PC-9 (cell line): ENCODE measurements at regions of chr5 and their contacts with region 1.

Region 1: DNA sequence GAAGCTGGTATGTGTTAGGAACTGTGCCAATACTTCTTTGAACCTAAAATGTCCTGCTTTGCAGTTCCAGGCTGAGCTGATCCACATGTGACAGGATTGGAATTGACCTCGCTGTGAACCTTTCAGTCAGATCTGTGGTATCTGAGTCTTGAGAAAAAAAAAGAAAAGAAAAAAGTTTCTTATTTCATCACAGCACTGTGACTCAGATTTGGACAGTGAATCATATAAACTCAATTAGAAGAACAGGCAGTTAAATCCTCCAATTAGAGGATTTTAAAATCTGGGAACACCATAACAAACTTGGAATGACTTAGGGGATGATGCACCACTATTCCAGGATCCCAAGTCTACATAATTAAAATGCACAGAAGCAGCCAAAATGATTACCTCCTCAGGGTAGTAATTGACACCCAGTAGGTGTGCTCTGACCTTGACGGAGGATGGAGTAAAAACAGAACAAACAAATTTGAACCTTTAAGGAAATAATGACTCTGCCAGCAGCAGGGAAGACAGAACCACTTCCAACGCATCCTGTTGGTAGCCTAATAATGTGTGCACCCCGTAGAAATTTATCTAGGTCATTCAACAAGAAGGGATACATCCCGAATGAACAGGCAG is 57.8 kb upstream of the RAI14 start:
- DNase-seq: peak; percentile 69 to 98
- H3K4me3 ChIP-seq: peak overlapping the region; percentile 6; the same call in 1 of the 2 replicates
- H3K27ac ChIP-seq: peak overlapping the region; percentile 88
- H3K4me1 ChIP-seq: peaks cover 43% of the 10 kb centered on the region
- H3K27me3 ChIP-seq: no peaks in the 10 kb centered on the region
- CTCF ChIP-seq: no peak

Region 2: GRCh38 chr5:34608859-34609648 is 10.8 kb after region 1 on chr5:
- CTCF ChIA-PET with region 1: no interaction called
- POLR2A ChIA-PET with region 1: no interaction called
- intact Hi-C with region 1: loop called (anchors 1 kb)
- DNase-seq: peak; percentile 43 to 94
- H3K4me3 ChIP-seq: peak overlapping the region; percentile 12; the same call in 1 of the 2 replicates
- H3K27ac ChIP-seq: peak overlapping the region; percentile 82
- H3K4me1 ChIP-seq: peaks cover 39% of the 10 kb centered on the region
- H3K27me3 ChIP-seq: no peaks in the 10 kb centered on the region
- CTCF ChIP-seq: no peak

Region 3: DNA sequence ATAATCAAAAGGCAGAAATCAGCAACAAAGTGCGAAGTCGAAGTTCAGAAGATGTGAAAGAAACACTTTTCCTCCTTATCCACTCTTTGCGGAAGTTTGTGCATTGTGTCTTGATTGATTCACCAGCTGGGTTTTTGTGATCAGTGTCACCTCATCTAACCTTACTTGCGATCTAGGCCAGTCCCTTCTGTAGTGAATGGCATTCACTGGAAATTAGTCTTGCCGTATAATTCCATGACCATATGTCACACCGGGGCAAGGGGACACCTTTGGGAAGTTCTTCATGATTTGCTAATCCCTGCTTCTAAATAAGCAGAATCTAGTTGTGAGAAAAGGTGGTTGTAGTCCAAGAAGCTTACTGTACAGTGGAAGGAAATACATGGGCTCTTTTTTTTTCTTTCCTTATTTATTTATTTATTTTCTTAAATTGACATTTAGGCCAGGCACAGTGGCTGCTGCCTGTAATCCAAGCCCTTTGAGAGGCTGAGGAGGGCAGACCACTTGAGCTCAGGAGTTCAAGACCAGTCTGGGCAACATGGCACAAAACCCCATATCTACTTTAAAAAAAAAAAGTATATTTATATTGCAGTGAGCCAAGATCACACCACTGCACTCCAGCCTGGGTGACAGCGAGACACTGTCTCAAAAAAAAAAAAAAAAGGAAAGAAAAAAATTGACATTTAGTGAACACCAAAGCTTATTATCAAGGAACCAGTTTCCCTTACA is 65.6 kb after region 1 on chr5:
- CTCF ChIA-PET with region 1: no interaction called
- POLR2A ChIA-PET with region 1: interaction called, 24 read pairs
- intact Hi-C with region 1: no loop called
- DNase-seq: no peak
- H3K4me3 ChIP-seq: no peak overlapping the region
- H3K27ac ChIP-seq: 0 out of 2 replicates have a peak overlapping the region, but pooled peaks have one; percentile 4
- H3K4me1 ChIP-seq: peaks cover 28% of the 10 kb centered on the region
- H3K27me3 ChIP-seq: no peaks in the 10 kb centered on the region
- CTCF ChIP-seq: no peak

Region 4: GRCh38 chr5:34735491-34736363 is 137.4 kb after region 1 on chr5:
- CTCF ChIA-PET with region 1: no interaction called
- POLR2A ChIA-PET with region 1: no interaction called
- intact Hi-C with region 1: loop called (anchors 5 kb)
- DNase-seq: peak; percentile 50 to 67
- H3K4me3 ChIP-seq: no peak overlapping the region
- H3K27ac ChIP-seq: peak overlapping the region; percentile 20
- H3K4me1 ChIP-seq: peaks cover 14% of the 10 kb centered on the region
- H3K27me3 ChIP-seq: no peaks in the 10 kb centered on the region
- CTCF ChIP-seq: no peak

Region 5: DNA sequence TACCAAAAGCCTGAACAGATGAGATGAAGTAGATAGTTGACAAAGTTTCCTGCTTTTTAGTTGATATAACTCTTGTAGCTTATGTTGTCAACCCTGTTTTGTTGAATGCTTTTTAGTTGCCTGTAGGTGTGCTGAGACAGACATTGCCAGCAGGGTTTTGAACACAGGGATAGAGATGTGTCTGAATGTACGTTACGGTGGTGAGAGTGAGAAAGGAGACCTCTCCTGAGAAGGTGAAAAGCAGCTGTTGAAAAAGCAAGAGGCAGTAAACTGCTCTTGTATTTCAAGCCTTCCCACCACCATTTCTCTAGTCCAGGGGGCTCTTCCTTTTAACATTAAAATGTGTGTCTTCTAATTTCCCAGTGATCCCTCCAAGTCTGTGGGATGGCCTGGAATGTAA is 345.8 kb after region 1 on chr5:
- CTCF ChIA-PET with region 1: no interaction called
- POLR2A ChIA-PET with region 1: no interaction called
- intact Hi-C with region 1: no loop called
- DNase-seq: no peak
- H3K4me3 ChIP-seq: no peak overlapping the region
- H3K27ac ChIP-seq: no peak overlapping the region
- H3K4me1 ChIP-seq: no peaks in the 10 kb centered on the region
- H3K27me3 ChIP-seq: no peaks in the 10 kb centered on the region
- CTCF ChIP-seq: no peak